A549 (cell line): ENCODE measurements at regions of chr5 and their contacts with region 1.

Region 1: GRCh38 chr5:141811287-141812155 is 66.7 kb downstream of the PCDH1 start:
- DNase-seq: peak in 1 of 2 experiments; percentile 62
- ATAC-seq: peak; percentile 44 to 74; a peak in 4 of 6 replicates
- H3K4me3 ChIP-seq: no peak overlapping the region
- H3K27ac ChIP-seq: no peak overlapping the region
- H3K4me1 ChIP-seq: no peaks in the 10 kb centered on the region
- CTCF ChIP-seq: peak; percentile 41
- EP300 ChIP-seq: no peak
- POLR2A ChIP-seq: no peak
- RAD21 ChIP-seq: 0 out of 5 replicates have a peak, but pooled peaks of 1 of the 2 experiments have one; percentile 11

Region 2: GRCh38 chr5:141701360-141702119 is 110.0 kb before region 1 on chr5:
- CTCF ChIA-PET with region 1: interaction called, 34 read pairs
- POLR2A ChIA-PET with region 1: no interaction called
- DNase-seq: no peak
- ATAC-seq: peak; percentile 17 to 52; a peak in 3 of 6 replicates
- H3K4me3 ChIP-seq: peak overlapping the region; percentile 39; the same call in 1 of the 3 replicates
- H3K27ac ChIP-seq: no peak overlapping the region
- H3K4me1 ChIP-seq: 0 out of 3 replicates have a peak, but pooled peaks cover 4% of the 10 kb centered on the region
- CTCF ChIP-seq: no peak
- EP300 ChIP-seq: no peak
- POLR2A ChIP-seq: no peak
- RAD21 ChIP-seq: no peak

Region 3: DNA sequence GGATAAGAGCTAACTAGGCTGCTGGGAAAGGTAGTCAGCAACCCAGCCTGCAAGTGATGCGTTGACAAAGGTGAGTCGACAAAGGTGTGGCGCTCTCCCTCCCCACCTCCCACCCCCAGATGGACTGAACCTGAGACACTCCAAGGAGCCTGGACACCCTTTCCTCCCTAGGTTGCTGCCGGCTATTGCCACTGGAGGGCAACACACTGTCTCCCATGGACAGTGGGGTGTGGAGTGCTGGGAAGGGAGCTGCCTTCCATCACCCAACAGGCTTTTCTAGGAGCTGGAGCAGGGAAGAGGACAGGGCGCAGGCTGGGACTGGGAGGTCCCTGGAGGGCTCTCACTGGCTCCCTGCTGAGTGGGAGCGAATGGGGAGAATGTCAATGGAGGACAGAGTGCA is 54.1 kb before region 1 on chr5:
- CTCF ChIA-PET with region 1: interaction called, 11 read pairs
- POLR2A ChIA-PET with region 1: no interaction called
- DNase-seq: peak; percentile 54 to 72
- ATAC-seq: peak; percentile 71 to 91
- H3K4me3 ChIP-seq: no peak overlapping the region
- H3K27ac ChIP-seq: no peak overlapping the region
- H3K4me1 ChIP-seq: no peaks in the 10 kb centered on the region
- CTCF ChIP-seq: peak; percentile 35; the same call in 2 of the 3 replicates
- EP300 ChIP-seq: no peak
- POLR2A ChIP-seq: no peak
- RAD21 ChIP-seq: peak; percentile 48 to 63; a peak in 3 of 5 replicates

Region 4: DNA sequence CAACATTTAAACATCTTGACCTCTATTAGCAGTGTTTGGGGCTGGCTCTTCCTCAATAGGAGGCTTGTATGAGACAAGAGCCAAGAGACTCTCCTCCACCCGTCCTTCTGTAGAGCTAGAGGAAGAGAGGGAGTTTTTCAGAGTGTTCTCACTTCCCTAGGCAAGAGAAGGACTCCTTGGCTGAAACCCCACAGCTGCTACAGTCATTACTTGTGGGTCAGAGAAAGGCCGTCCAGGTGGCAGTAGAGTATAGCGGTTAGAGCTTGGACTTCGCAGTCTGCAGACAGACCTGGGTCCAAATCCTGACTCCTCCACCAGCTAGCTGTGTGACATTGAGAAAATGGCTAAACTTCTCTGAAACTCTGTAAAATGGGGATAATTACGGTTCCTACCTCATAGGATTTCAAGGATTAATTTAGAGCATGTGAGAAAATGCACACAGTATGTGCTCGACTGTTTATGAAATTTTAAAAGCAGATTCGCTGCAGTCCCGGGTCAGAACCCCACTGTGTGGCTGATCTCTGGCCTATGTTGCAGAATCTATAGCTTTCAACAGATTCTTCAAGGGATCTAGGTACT is 48.6 kb before region 1 on chr5:
- CTCF ChIA-PET with region 1: interaction called, 11 read pairs
- POLR2A ChIA-PET with region 1: no interaction called
- DNase-seq: peak in 1 of 2 experiments; percentile 22
- ATAC-seq: peak in 1 of 2 experiments; percentile 26; a peak in 1 of 6 replicates
- H3K4me3 ChIP-seq: no peak overlapping the region
- H3K27ac ChIP-seq: no peak overlapping the region
- H3K4me1 ChIP-seq: no peaks in the 10 kb centered on the region
- CTCF ChIP-seq: no peak
- EP300 ChIP-seq: no peak
- POLR2A ChIP-seq: no peak
- RAD21 ChIP-seq: peak in 1 of 2 experiments; percentile 37; a peak in 2 of 5 replicates

Region 5: GRCh38 chr5:141825791-141826560 is 14.5 kb after region 1 on chr5:
- CTCF ChIA-PET with region 1: interaction called, 40 read pairs
- POLR2A ChIA-PET with region 1: no interaction called
- DNase-seq: peak; percentile 38 to 69
- ATAC-seq: peak; percentile 67 to 84; a peak in 3 of 6 replicates
- H3K4me3 ChIP-seq: no peak overlapping the region
- H3K27ac ChIP-seq: no peak overlapping the region
- H3K4me1 ChIP-seq: peaks cover 13% of the 10 kb centered on the region; the same call in 2 of the 3 replicates
- CTCF ChIP-seq: peak; percentile 45
- EP300 ChIP-seq: no peak
- POLR2A ChIP-seq: no peak
- RAD21 ChIP-seq: peak; percentile 27 to 35; a peak in 1 of 5 replicates

Region 6: GRCh38 chr5:141889282-141889871 is 77.9 kb after region 1 on chr5:
- CTCF ChIA-PET with region 1: interaction called, 11 read pairs
- POLR2A ChIA-PET with region 1: interaction called, 3 read pairs
- DNase-seq: peak in 1 of 2 experiments; percentile 31
- ATAC-seq: peak; percentile 71 to 75; a peak in 3 of 6 replicates
- H3K4me3 ChIP-seq: no peak overlapping the region
- H3K27ac ChIP-seq: no peak overlapping the region
- H3K4me1 ChIP-seq: no peaks in the 10 kb centered on the region
- CTCF ChIP-seq: peak; percentile 51
- EP300 ChIP-seq: no peak
- POLR2A ChIP-seq: no peak
- RAD21 ChIP-seq: peak; percentile 43 to 50; a peak in 3 of 5 replicates